Posterior vena cava (tissue), 2 donors: ENCODE measurements at regions of chr9 and their contacts with region 1.

Region 1: GRCh38 chr9:73125651-73126050 is 26.0 kb upstream of the ANXA1 start:
- DNase-seq: no peak

Region 2: GRCh38 chr9:71704796-71705195 is 1420.9 kb before region 1 on chr9:
- intact Hi-C with region 1: loop called in 1 of 2 experiments (anchors 5 kb)
- DNase-seq: no peak